ENCODE measurements at regions of chr19 and their contacts with region 1.

Region 1: DNA sequence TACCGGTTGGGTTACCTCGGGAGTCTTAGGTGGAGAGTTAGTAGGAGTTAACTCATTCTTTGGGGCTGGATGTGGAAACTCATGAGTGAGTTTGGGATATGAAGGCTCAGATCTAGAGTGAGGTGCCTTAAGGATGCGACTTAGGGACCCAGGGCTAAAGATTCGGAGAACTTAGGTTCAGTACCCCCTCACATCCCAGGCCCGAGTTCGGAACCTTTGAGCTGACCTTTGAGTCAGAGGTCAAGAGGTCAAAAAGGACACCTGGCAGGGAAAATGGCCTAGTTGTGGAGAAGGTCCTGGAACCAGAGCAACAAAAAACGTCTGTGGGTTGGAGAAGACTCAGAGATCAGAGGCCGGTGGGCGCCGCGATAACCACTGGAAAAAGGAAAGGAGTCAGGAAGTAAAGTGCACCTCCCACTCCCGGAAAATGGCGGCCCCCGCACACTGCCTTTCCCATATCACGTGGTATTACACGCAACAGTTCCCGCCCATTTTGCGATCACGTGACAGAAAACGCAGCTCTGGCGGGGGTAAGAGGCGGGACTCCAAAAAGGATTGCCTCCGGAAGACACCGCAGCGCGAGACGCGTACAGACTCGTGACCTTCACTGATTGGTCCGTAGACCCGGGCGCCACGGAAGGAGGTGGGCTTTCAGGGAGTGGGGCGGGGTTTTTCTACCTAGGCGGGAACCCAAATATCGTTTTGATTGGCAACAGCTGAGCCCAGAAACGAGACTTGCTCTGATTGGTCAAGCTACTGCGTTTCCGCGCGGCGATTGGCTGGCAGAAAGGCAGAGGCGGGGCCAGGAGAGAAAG is at the start of gene ACTMAP:
- DNase-seq: peak; percentile 99 to 100
- ATAC-seq: peak; percentile 92 to 95 (median 94)
- H3K4me3 ChIP-seq: peak within 1 kb of the TSS; percentile 84
- H3K27ac ChIP-seq: peak within 1 kb of the TSS; percentile 96
- H3K4me1 ChIP-seq: peaks cover 25% of the 10 kb centered on the region
- H3K27me3 ChIP-seq: no peaks in the 10 kb centered on the region
- CTCF ChIP-seq: no peak
- total RNA-seq, gene ACTMAP: 6.7 to 13.3 (median 9.6) TPM

Region 2: GRCh38 chr19:40512473-40513344 is 237.6 kb before region 1 on chr19:
- intact Hi-C with region 1: no loop called
- DNase-seq: no peak
- ATAC-seq: peak; percentile 59 to 75 (median 68)
- H3K4me3 ChIP-seq: peak overlapping the region; percentile 53
- H3K27ac ChIP-seq: no peak overlapping the region
- H3K4me1 ChIP-seq: no peaks in the 10 kb centered on the region
- H3K27me3 ChIP-seq: peaks cover 0 to 30% (median 2%) of the 10 kb centered on the region in 3 donors
- CTCF ChIP-seq: no peak

Region 3: GRCh38 chr19:40689318-40690049 is 60.8 kb before region 1 on chr19:
- intact Hi-C with region 1: no loop called
- DNase-seq: peak; percentile 43 to 66
- ATAC-seq: no peak
- H3K4me3 ChIP-seq: peak overlapping the region; percentile 72
- H3K27ac ChIP-seq: peak overlapping the region; percentile 83
- H3K4me1 ChIP-seq: peaks cover 8% of the 10 kb centered on the region
- H3K27me3 ChIP-seq: no peaks in the 10 kb centered on the region
- CTCF ChIP-seq: no peak

Region 4: GRCh38 chr19:40777937-40778705 is 27.9 kb after region 1 on chr19 and contains the start of gene RAB4B:
- intact Hi-C with region 1: loop called in 1 of 2 experiments (anchors 2 kb)
- DNase-seq: peak; percentile 100
- ATAC-seq: peak; percentile 96 to 97 (median 96)
- H3K4me3 ChIP-seq: peak within 1 kb of the TSS; percentile 85
- H3K27ac ChIP-seq: peak within 1 kb of the TSS; percentile 98
- H3K4me1 ChIP-seq: peaks cover 12% of the 10 kb centered on the region
- H3K27me3 ChIP-seq: no peaks in the 10 kb centered on the region
- CTCF ChIP-seq: no peak
- total RNA-seq, gene RAB4B: 8.2 to 14.5 (median 13.9) TPM